Gastrocnemius medialis (tissue), 4 donors: ENCODE measurements at regions of chr10 and their contacts with region 1.

Region 1: GRCh38 chr10:29517352-29517923 is 117.3 kb downstream of the SVIL start:
- DNase-seq: no peak
- ATAC-seq: peak in 1 of 2 donors; percentile 23
- H3K4me3 ChIP-seq: no peak overlapping the region
- H3K27ac ChIP-seq: peak overlapping the region; percentile 82 to 90 (median 87)
- H3K4me1 ChIP-seq: peaks cover 66 to 81% of the 10 kb centered on the region in 2 donors
- H3K27me3 ChIP-seq: no peaks in the 10 kb centered on the region
- CTCF ChIP-seq: peak in 4 of 5 experiments; percentile 33 to 59 (median 56)
- POLR2A ChIP-seq: no peak

Region 2: GRCh38 chr10:29496341-29497162 is 20.9 kb before region 1 on chr10:
- in situ Hi-C with region 1: no loop called
- intact Hi-C with region 1: no loop called
- DNase-seq: peak in 1 of 2 donors; percentile 63
- ATAC-seq: peak; percentile 42 to 64
- H3K4me3 ChIP-seq: no peak overlapping the region
- H3K27ac ChIP-seq: peak overlapping the region in 2 of 4 donors; percentile 59 to 79
- H3K4me1 ChIP-seq: peaks cover 9 to 17% of the 10 kb centered on the region in 2 donors
- H3K27me3 ChIP-seq: no peaks in the 10 kb centered on the region
- CTCF ChIP-seq: peak; percentile 79 to 95 (median 87)
- POLR2A ChIP-seq: no peak

Region 3: DNA sequence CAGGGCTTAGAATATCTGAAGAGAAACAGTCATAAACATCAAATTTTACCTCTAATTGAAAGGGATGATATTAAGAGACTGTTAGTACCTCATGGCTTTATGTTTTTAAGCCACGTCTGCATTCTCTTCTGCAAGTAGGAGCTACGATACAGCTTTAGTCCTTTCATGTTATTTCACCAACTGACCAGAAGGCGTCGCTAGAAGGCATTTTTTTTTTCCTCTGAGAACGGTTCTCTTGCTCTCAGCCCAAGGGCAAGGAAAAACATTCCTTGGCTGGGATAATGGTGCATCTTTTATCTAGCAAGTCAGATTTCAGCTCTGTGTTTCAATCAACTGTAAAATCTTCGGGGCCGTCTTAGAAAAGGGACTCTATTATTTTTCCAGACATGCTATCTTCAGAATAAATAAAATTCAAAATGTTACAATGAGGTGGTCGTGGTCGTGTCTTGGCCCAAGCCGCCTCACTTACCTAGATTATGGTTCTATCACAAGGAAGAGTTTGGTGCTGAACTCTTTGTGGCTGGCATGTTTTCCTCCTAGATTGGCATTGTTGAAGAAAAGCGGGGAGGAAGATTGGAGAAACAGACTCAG is 1153.7 kb after region 1 on chr10:
- in situ Hi-C with region 1: loop called in 1 of 4 experiments (anchors 25 kb)
- intact Hi-C with region 1: no loop called
- DNase-seq: no peak
- ATAC-seq: peak; percentile 64 to 76
- H3K4me3 ChIP-seq: peak overlapping the region; percentile 21 to 38 (median 34)
- H3K27ac ChIP-seq: no peak overlapping the region
- H3K4me1 ChIP-seq: no peaks in the 10 kb centered on the region
- H3K27me3 ChIP-seq: no peaks in the 10 kb centered on the region
- CTCF ChIP-seq: peak; percentile 28 to 69 (median 58)
- POLR2A ChIP-seq: no peak